Caco-2 (cell line): ENCODE measurements at regions of chr10 and their contacts with region 1.

Region 1: GRCh38 chr10:32156010-32156495 is 99.8 kb upstream of the KIF5B start:
- DNase-seq: peak; percentile 76 to 79
- H3K4me3 ChIP-seq: no peak overlapping the region
- H3K4me3 Mint-ChIP-seq: peak overlapping the region; percentile 48
- H3K27ac Mint-ChIP-seq: peak overlapping the region; percentile 76
- H3K4me1 ChIP-seq: peaks cover 22% of the 10 kb centered on the region
- H3K4me1 Mint-ChIP-seq: peaks cover 29% of the 10 kb centered on the region
- H3K27me3 ChIP-seq: no peaks in the 10 kb centered on the region
- H3K27me3 Mint-ChIP-seq: no peaks in the 10 kb centered on the region
- CTCF ChIP-seq: no peak

Region 2: DNA sequence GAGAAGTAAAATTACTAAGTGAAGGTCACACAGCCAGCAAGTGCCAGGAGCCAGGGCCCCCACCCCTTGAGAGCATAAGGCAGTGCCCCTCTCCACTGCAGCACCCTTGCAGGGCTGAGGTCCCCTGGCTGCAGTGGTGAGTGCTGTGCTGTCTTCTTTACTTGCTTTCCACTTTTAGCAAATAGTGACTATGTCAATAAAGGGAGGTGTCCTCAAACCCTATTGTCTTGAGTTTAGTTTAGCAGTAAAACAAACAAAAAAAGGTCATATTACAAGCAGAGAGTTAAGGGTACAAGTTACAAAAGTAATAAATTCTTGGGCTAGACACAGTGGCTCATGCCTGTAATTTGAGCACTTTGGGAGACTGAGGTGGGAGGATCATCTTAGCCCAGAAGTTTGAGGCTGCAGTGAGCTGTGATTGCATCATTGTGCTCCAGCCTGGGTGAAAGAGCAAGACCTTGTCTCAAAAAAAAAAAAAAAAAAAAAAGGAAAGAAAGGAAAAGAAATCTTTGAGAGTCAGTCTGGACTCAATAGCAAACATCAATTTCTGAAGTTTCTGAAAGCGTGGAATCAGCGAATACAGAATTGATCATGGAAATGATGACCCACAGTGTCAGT is 60.8 kb before region 1 on chr10:
- CTCF ChIA-PET with region 1: no interaction called
- POLR2A ChIA-PET with region 1: no interaction called
- intact Hi-C with region 1: loop called (anchors 2 kb)
- DNase-seq: peak; percentile 70 to 83
- H3K4me3 ChIP-seq: no peak overlapping the region
- H3K4me3 Mint-ChIP-seq: no peak overlapping the region
- H3K27ac Mint-ChIP-seq: peak overlapping the region; percentile 68
- H3K4me1 ChIP-seq: peaks cover 21% of the 10 kb centered on the region
- H3K4me1 Mint-ChIP-seq: peaks cover 21% of the 10 kb centered on the region
- H3K27me3 ChIP-seq: no peaks in the 10 kb centered on the region
- H3K27me3 Mint-ChIP-seq: no peaks in the 10 kb centered on the region
- CTCF ChIP-seq: peak in 1 of 2 experiments; percentile 36

Region 3: DNA sequence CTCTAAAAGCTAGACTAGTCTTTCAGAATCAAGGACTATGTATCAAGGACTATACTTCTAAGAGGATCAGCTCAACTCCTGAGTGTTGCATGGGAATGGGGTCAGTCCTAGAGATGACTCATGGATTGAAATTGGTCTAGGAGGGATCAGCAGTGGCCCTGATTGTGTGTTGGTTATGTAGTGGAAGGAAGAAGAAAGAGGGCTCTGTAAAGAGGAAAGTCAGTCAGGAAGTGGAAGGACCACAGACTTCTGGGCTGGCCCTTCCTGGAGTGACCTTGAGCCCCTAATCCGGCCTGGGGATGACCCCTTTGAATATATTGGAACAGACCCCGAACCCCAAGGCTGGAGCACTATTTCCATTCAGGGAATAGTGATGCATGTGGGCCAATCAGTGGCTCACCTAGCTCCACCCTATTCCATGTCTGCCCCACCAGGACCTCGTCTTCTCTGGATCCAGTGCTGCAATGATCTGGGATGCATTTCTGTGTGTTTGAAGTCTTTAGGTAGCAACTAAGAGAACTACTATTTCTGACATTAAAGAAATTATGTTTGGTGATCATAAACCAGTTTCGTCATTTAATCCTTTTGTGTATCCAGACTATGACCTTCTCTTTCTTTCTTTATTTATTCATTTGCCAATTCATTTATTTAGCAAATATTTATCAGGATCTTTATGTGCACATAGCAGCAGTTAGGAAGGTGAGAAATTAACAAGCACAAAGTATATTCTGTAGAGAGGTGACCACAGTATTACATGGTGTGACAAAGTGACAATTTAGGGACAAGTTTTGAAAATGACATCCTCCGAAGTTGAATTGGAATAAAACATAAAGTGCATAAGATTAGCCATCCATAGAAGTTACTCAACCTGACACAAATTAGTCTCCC is 51.2 kb before region 1 on chr10:
- CTCF ChIA-PET with region 1: no interaction called
- POLR2A ChIA-PET with region 1: no interaction called
- intact Hi-C with region 1: loop called (anchors 1 kb)
- DNase-seq: no peak
- H3K4me3 ChIP-seq: no peak overlapping the region
- H3K4me3 Mint-ChIP-seq: no peak overlapping the region
- H3K27ac Mint-ChIP-seq: no peak overlapping the region
- H3K4me1 ChIP-seq: peaks cover 27% of the 10 kb centered on the region
- H3K4me1 Mint-ChIP-seq: peaks cover 18% of the 10 kb centered on the region
- H3K27me3 ChIP-seq: no peaks in the 10 kb centered on the region
- H3K27me3 Mint-ChIP-seq: no peaks in the 10 kb centered on the region
- CTCF ChIP-seq: no peak